MCF 10A (cell line): ENCODE measurements at regions of chr17 and their contacts with region 1.

Region 1: GRCh38 chr17:63406689-63407330 is 39.3 kb downstream of the CYB561 start:
- DNase-seq: peak; percentile 90
- H3K4me3 Mint-ChIP-seq: no peak overlapping the region
- H3K27ac Mint-ChIP-seq: no peak overlapping the region
- H3K4me1 Mint-ChIP-seq: peaks cover 5% of the 10 kb centered on the region
- H3K27me3 Mint-ChIP-seq: no peaks in the 10 kb centered on the region
- CTCF ChIP-seq: peak; percentile 78

Region 2: DNA sequence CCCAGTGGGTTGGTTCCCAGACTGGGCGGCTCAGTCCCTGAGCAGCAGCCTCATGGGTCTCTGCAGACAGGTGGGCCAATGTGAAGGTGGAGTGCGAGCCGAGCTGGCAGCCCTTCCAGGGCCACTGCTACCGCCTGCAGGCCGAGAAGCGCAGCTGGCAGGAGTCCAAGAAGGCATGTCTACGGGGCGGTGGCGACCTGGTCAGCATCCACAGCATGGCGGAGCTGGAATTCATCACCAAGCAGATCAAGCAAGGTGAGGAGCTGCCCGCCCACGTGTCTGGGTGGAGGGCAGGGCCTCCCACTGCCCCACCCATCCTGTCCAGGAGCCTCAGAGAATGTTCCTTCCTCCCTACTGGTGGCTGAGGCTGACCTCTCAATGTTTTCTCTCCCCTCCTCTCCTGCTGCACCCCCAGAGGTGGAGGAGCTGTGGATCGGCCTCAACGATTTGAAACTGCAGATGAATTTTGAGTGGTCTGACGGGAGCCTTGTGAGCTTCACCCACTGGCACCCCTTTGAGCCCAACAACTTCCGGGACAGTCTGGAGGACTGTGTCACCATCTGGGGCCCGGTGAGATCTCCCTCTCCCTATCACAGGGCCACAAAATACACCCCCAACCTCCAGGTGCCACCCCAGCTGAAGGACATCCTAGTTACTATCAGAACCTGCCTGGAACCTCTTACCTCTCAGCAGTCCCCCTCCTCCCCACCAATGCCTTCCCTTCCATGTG is 735.1 kb before region 1 on chr17:
- CTCF ChIA-PET with region 1: interaction called, 63 read pairs
- POLR2A ChIA-PET with region 1: interaction called, 11 read pairs
- intact Hi-C with region 1: loop called (anchors 1 kb)
- DNase-seq: peak; percentile 85
- H3K4me3 Mint-ChIP-seq: peak overlapping the region; percentile 63
- H3K27ac Mint-ChIP-seq: peak overlapping the region; percentile 89
- H3K4me1 Mint-ChIP-seq: peaks cover 28% of the 10 kb centered on the region
- H3K27me3 Mint-ChIP-seq: no peaks in the 10 kb centered on the region
- CTCF ChIP-seq: no peak

Region 3: DNA sequence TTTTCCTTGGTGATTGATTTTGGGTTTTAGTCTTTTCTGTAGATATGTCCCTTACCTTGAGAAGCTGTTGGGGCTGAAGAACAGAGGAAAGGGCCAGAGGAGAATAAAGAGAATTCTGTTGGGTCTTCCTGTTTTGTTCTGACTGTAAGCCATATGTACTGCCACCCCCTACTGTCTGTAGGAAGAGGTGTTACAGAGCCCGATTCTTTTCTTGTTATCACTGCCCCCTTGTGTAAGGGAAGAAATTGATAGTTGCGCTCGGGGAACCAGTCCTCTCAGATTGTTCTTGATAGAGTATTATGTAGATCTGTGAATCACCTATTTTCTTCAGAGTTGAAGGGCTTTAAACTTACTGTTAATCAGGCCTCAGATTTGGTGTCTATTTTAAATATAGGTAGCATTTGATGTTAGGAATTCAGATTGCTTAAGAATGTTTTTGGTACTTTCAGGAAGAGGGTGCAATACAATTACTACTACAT is 438.3 kb before region 1 on chr17:
- CTCF ChIA-PET with region 1: interaction called, 5 read pairs
- POLR2A ChIA-PET with region 1: interaction called, 6 read pairs
- intact Hi-C with region 1: loop called (anchors 1 kb)
- DNase-seq: peak; percentile 89
- H3K4me3 Mint-ChIP-seq: peak overlapping the region; percentile 61
- H3K27ac Mint-ChIP-seq: no peak overlapping the region
- H3K4me1 Mint-ChIP-seq: peaks cover 27% of the 10 kb centered on the region
- H3K27me3 Mint-ChIP-seq: no peaks in the 10 kb centered on the region
- CTCF ChIP-seq: peak; percentile 87

Region 4: DNA sequence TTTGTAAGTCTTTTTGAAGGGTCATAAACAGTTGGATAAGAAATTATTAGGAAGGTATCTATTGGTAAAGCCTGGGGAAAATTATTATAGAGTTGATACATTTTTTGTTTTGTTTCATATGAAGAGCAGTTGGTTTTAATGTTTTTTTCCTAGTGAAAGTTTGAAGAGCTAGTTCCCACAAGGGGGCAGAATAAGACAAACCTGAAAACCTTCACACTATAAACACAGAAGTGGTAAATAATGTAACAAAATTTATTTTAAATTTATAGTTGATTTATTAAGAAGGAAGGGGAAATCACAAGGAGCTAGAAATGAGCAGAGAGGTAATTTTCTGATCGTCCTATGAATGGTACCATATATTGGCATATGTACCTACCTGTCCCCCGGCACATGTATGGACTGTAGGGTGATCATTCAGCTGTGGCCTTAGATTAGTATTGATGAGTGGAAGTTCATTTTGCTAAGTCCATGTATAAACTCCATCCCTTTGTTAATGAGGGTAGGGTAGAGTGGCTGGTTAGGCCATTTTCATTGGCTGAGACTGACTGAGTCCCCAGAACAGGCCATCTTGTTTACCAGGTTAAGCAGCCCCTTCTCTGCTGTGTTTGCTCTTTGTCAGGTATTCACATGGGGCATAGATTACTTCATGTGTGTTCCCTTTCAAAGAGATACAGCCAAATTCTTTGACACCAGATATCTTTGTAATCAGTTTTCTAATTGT is 324.4 kb before region 1 on chr17:
- CTCF ChIA-PET with region 1: interaction called, 45 read pairs
- POLR2A ChIA-PET with region 1: interaction called, 8 read pairs
- intact Hi-C with region 1: loop called (anchors 1 kb)
- DNase-seq: peak; percentile 21
- H3K4me3 Mint-ChIP-seq: no peak overlapping the region
- H3K27ac Mint-ChIP-seq: no peak overlapping the region
- H3K4me1 Mint-ChIP-seq: peaks cover 14% of the 10 kb centered on the region
- H3K27me3 Mint-ChIP-seq: no peaks in the 10 kb centered on the region
- CTCF ChIP-seq: peak; percentile 44

Region 5: GRCh38 chr17:63358111-63358839 is 48.5 kb before region 1 on chr17:
- CTCF ChIA-PET with region 1: no interaction called
- POLR2A ChIA-PET with region 1: no interaction called
- intact Hi-C with region 1: no loop called
- DNase-seq: no peak
- H3K4me3 Mint-ChIP-seq: no peak overlapping the region
- H3K27ac Mint-ChIP-seq: peak overlapping the region; percentile 33
- H3K4me1 Mint-ChIP-seq: peaks cover 16% of the 10 kb centered on the region
- H3K27me3 Mint-ChIP-seq: no peaks in the 10 kb centered on the region
- CTCF ChIP-seq: no peak

Region 6: DNA sequence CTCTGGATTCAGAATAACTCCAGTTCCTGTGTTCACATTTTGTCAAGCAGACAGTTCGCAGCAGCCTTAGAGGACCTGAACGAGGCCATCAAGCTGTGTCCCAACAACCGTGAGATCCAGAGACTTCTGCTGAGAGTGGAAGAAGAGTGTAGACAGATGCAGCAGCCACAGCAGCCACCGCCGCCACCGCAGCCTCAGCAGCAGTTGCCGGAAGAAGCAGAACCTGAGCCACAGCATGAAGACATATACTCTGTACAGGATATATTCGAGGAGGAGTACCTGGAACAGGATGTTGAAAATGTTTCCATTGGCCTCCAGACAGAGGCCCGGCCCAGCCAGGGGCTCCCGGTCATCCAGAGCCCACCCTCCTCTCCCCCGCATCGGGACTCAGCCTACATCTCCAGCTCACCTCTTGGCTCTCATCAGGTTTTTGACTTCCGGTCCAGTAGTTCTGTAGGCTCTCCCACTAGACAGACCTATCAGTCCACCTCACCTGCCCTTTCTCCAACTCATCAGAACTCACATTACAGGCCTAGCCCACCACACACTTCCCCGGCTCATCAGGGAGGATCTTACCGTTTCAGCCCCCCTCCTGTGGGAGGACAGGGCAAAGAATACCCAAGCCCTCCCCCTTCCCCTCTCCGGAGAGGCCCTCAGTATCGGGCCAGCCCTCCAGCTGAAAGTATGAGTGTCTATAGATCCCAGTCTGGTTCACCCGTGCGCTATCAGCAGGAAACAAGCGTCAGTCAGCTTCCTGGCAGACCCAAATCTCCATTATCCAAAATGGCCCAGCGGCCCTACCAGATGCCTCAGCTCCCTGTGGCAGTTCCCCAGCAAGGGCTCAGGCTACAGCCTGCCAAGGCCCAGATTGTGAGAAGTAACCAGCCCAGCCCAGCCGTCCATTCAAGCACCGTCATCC is 13.4 kb after region 1 on chr17:
- CTCF ChIA-PET with region 1: interaction called, 21 read pairs
- POLR2A ChIA-PET with region 1: interaction called, 4 read pairs
- intact Hi-C with region 1: no loop called
- DNase-seq: no peak
- H3K4me3 Mint-ChIP-seq: no peak overlapping the region
- H3K27ac Mint-ChIP-seq: no peak overlapping the region
- H3K4me1 Mint-ChIP-seq: peaks cover 11% of the 10 kb centered on the region
- H3K27me3 Mint-ChIP-seq: no peaks in the 10 kb centered on the region
- CTCF ChIP-seq: no peak

Region 7: GRCh38 chr17:63911657-63912426 is 505.0 kb after region 1 on chr17:
- CTCF ChIA-PET with region 1: no interaction called
- POLR2A ChIA-PET with region 1: no interaction called
- intact Hi-C with region 1: no loop called
- DNase-seq: peak; percentile 36
- H3K4me3 Mint-ChIP-seq: no peak overlapping the region
- H3K27ac Mint-ChIP-seq: no peak overlapping the region
- H3K4me1 Mint-ChIP-seq: no peaks in the 10 kb centered on the region
- H3K27me3 Mint-ChIP-seq: peaks cover 29% of the 10 kb centered on the region
- CTCF ChIP-seq: peak; percentile 83